Left cardiac atrium (tissue), 4 donors: ENCODE measurements at regions of chr20 and their contacts with region 1.

Region 1: GRCh38 chr20:47677635-47678453 is 107.4 kb downstream of the SULF2 start:
- DNase-seq: peak; percentile 42
- ATAC-seq: peak in 1 of 2 donors; percentile 24

Region 2: GRCh38 chr20:47772995-47773716 is 95.3 kb after region 1 on chr20:
- intact Hi-C with region 1: loop called in 1 of 2 experiments (anchors 10 kb)
- DNase-seq: peak; percentile 77
- ATAC-seq: peak; percentile 53 to 59

Region 3: GRCh38 chr20:47785854-47786764 is 108.3 kb after region 1 on chr20:
- intact Hi-C with region 1: loop called in 1 of 2 experiments (anchors 5 kb)
- DNase-seq: peak; percentile 75
- ATAC-seq: peak; percentile 85 to 89

Region 4: DNA sequence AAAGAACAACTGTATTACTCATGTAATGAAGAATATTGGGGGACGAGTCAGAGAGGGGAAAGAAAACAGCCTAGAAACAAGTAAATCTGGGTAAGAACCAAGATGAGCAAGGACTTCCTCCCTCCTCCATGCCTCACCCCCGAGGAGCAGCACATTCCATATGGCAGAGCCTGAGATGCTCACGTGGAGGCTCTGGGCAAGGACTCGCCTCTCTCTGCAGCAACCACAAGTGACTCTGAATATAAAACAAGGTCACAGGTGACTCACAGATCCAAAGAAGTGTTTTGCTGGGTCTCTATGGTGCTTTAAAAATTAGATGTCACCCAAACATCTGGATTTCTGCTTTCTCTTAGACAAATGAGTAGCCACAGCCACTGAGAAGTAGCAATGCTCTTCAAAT is 560.5 kb after region 1 on chr20:
- intact Hi-C with region 1: no loop called
- DNase-seq: no peak
- ATAC-seq: no peak